OCI-LY7 (cell line): ENCODE measurements at regions of chr1 and their contacts with region 1.

Region 1: DNA sequence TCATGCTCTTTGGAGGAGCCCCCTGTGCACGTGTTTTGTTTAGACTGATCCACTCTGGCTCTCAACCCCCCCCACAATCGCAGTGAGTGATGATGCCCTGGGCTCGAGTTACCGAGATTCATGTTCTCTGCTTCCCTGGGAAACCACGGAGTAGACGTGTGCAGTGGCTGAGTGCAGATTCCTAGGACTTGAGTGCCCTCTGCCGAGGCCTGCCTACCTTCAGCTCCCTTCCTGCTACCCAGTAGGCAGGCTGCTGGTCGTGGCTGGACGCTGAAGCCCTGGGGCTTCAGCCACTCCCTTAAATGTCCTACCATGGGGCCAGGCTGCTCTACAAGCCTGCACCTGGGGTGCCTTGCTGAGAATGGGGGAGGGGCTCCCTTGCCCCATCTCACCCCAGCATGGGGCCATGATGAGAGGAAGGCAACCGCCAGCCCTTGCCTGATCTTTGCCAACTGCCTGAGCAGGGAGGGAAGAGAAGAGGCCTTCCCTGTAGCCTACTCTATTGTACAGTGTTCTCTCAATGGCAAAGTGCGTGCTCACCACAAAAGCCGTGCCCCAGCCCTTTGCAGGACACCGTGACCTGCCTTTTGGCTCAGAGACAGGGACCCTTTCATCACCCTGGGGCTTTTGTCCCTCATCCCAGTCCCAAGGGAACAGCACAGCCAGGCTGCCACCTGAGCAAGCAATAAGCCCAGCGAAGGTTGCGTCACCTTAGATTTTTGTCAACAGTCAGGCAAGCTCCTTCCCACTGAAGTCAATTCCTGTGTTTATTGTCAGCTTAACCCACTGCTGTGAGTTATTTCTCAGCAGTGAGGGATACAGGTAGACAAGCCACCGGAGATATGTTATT is 4.1 kb upstream of the GRIK3 start:
- DNase-seq: peak; percentile 75
- H3K4me3 ChIP-seq: no peak overlapping the region
- H3K27ac ChIP-seq: no peak overlapping the region
- H3K4me1 ChIP-seq: peaks cover 55% of the 10 kb centered on the region
- CTCF ChIP-seq: peak; percentile 75

Region 2: GRCh38 chr1:36576118-36576517 is 462.3 kb before region 1 on chr1:
- CTCF ChIA-PET with region 1: no interaction called
- POLR2A ChIA-PET with region 1: no interaction called
- intact Hi-C with region 1: loop called (anchors 2 kb)
- DNase-seq: peak; percentile 64
- H3K4me3 ChIP-seq: no peak overlapping the region
- H3K27ac ChIP-seq: no peak overlapping the region
- H3K4me1 ChIP-seq: no peaks in the 10 kb centered on the region
- CTCF ChIP-seq: peak; percentile 90

Region 3: GRCh38 chr1:36609241-36610027 is 429.0 kb before region 1 on chr1:
- CTCF ChIA-PET with region 1: interaction called, 3 read pairs
- POLR2A ChIA-PET with region 1: no interaction called
- intact Hi-C with region 1: loop called (anchors 2 kb)
- DNase-seq: peak; percentile 76
- H3K4me3 ChIP-seq: no peak overlapping the region
- H3K27ac ChIP-seq: no peak overlapping the region
- H3K4me1 ChIP-seq: no peaks in the 10 kb centered on the region
- CTCF ChIP-seq: peak; percentile 98

Region 4: DNA sequence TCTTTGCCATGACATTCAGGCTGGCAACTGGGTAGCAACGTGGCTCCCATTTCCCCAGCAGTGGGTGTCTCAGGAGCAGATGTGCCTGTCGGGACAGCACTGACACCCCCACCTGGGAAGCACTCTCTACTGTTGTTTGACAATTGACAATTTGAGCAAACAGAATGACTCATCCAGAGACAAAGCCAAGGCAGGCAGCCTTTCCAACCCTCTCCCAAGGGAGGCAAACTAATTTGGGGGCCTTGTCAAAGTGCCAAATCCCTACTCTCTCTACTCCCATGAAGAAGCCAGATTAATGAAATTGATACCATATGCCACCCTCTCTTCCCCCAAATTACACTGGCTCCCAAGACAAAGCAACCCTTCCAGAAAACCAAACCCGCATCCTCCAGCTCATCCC is 69.7 kb before region 1 on chr1:
- CTCF ChIA-PET with region 1: no interaction called
- POLR2A ChIA-PET with region 1: no interaction called
- intact Hi-C with region 1: no loop called
- DNase-seq: no peak
- H3K4me3 ChIP-seq: no peak overlapping the region
- H3K27ac ChIP-seq: no peak overlapping the region
- H3K4me1 ChIP-seq: peaks cover 44% of the 10 kb centered on the region
- CTCF ChIP-seq: no peak

Region 5: DNA sequence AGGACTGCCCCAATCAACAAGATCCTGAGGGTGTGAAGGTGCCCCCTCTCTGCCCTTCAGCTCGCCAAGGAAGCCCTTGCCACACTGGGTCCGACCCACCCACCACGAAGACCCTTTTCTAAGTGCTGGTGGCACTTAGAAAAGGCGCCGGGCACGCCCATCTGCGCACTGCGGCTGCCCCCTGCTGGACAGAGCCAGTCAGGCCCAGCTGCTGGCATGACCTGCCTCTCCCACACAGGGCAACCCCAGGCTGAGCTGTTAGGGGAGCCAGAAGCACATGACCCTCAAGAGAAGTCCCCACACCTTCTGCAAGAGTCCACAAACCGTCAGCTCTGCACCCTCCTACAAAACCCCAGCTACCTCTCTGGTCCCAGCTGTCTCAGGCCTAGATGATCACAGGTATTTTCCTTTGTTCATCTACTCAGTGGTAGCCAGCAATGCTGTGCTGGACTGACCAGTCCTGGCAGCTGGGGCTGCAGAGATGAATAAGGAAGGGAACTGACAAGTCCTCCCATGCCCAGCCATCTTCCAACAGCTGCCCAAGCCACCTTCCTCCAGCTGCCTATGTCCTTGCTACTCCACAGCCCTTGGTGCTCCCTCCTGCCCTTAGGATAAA is 395.9 kb after region 1 on chr1:
- CTCF ChIA-PET with region 1: no interaction called
- POLR2A ChIA-PET with region 1: no interaction called
- intact Hi-C with region 1: loop called (anchors 5 kb)
- DNase-seq: peak; percentile 68
- H3K4me3 ChIP-seq: no peak overlapping the region
- H3K27ac ChIP-seq: no peak overlapping the region
- H3K4me1 ChIP-seq: no peaks in the 10 kb centered on the region
- CTCF ChIP-seq: peak; percentile 93